GM12878 (cell line): ENCODE measurements at regions of chr19 and their contacts with region 1.

Region 1: DNA sequence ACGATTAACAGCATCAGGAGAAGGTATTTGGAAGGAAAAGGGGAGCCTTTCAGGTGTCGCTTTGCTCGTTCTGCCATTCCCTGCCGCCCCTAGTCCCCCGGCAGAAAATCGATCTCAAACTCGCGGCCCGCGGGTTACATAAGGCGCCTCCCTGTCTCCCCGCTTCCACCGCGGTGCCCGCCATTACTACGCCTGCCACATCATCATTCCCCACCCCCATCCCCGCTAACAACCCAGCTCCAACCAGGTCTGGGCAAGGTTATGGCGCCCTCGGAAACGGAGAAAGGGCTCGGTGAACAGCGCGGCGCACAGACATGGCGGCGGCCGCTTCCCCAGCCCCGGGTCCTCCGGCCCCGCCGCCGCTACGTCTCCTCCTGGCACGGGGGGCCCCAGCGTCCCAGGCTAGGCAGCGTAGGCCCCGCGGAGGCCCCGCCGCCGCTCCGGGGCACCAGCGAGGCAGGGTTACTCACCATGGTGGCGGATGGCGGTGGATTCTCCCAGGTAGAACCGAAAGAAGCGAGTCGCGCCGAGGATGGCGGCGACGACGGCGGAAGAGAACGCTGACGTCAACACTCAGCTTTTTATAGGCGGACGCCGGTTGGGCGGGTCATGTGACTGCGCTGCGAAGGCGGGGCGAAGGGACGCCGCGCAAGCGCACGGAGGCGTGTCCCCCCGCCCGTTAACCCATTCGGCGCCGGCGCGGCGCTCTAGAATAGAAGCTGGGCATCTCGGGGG is at the start of gene EEF2:
- DNase-seq: peak; percentile 48
- ATAC-seq: peak; percentile 32
- H3K4me3 ChIP-seq: peak within 1 kb of the TSS; percentile 97
- H3K27ac ChIP-seq: peak within 1 kb of the TSS; percentile 79
- H3K4me1 ChIP-seq: peaks cover 25% of the 10 kb centered on the region
- H3K27me3 ChIP-seq: no peaks in the 10 kb centered on the region
- CTCF ChIP-seq: no peak
- EP300 ChIP-seq: 0 out of 4 replicates have a peak, but pooled peaks of 1 of the 2 experiments have one; percentile 22
- POLR2A ChIP-seq: peak; percentile 100
- RAD21 ChIP-seq: no peak
- polyA plus RNA-seq, gene EEF2: 513 to 937 TPM

Region 2: GRCh38 chr19:3798137-3798536 is 186.9 kb before region 1 on chr19:
- CTCF ChIA-PET with region 1: no interaction called
- POLR2A ChIA-PET with region 1: no interaction called
- RAD21 ChIA-PET with region 1: no interaction called
- SMC1A ChIA-PET with region 1: no interaction called
- in situ Hi-C with region 1: no loop called
- intact Hi-C with region 1: no loop called
- DNase-seq: no peak
- ATAC-seq: no peak
- H3K4me3 ChIP-seq: no peak overlapping the region
- H3K27ac ChIP-seq: no peak overlapping the region
- H3K4me1 ChIP-seq: 0 out of 2 replicates have a peak, but pooled peaks cover 4% of the 10 kb centered on the region
- H3K27me3 ChIP-seq: peaks cover 2 to 4% of the 10 kb centered on the region in 2 experiments; a peak in 3 of 4 replicates
- CTCF ChIP-seq: no peak
- EP300 ChIP-seq: no peak
- POLR2A ChIP-seq: no peak
- RAD21 ChIP-seq: no peak

Region 3: GRCh38 chr19:4058034-4058692 is 73.1 kb after region 1 on chr19:
- CTCF ChIA-PET with region 1: interaction called, 12 read pairs
- POLR2A ChIA-PET with region 1: interaction called, 11 read pairs
- RAD21 ChIA-PET with region 1: interaction called, 4 read pairs
- SMC1A ChIA-PET with region 1: no interaction called
- in situ Hi-C with region 1: loop called (anchors 5 kb)
- intact Hi-C with region 1: no loop called
- DNase-seq: no peak
- ATAC-seq: peak; percentile 9
- H3K4me3 ChIP-seq: no peak overlapping the region
- H3K27ac ChIP-seq: peak overlapping the region; percentile 87; the same call in 1 of the 2 replicates
- H3K4me1 ChIP-seq: peaks cover 25% of the 10 kb centered on the region
- H3K27me3 ChIP-seq: no peaks in the 10 kb centered on the region
- CTCF ChIP-seq: no peak
- EP300 ChIP-seq: no peak
- POLR2A ChIP-seq: no peak
- RAD21 ChIP-seq: no peak

Region 4: DNA sequence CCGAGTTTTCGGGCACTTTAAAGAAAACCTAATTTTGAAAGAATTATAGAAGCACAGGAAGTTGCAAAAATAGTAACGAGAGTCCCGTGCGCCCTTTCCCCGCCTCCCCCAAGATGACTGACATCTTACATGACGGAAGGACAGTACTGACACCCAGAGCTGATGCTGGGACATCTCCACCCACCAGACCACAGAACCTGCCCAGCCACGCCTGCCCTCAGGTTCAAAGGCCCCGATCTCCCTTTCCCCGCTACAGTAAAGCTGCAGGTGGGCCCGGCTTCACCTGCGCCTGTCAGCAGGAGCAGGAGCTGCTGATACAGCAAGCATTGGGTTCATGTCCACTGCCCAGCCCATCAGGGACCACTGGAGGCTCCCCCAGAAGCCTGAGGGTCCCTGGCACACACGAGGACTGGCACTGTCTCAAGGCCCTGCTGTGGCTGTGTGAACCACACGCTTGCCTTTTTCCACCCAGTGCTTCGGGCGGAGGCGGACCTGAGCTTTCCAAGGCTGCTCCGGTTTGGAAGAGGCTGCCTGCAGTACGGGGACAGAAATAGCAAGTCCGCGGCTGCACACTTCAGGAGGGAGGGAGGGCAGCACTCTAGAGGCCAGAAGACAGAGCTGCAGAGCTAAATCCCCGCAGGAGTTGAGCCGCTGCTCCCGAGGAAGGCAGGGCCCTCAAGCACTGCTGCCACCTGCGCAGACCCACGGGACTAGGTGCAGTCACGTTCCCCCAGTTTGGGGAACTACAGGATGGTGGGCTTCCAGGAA is 130.2 kb after region 1 on chr19:
- CTCF ChIA-PET with region 1: interaction called, 20 read pairs
- POLR2A ChIA-PET with region 1: interaction called, 12 read pairs
- RAD21 ChIA-PET with region 1: interaction called, 11 read pairs
- SMC1A ChIA-PET with region 1: interaction called, 13 read pairs
- in situ Hi-C with region 1: no loop called
- intact Hi-C with region 1: loop called (anchors 5 kb)
- DNase-seq: peak; percentile 67
- ATAC-seq: peak; percentile 96
- H3K4me3 ChIP-seq: peak overlapping the region; percentile 50
- H3K27ac ChIP-seq: peak overlapping the region; percentile 55
- H3K4me1 ChIP-seq: peaks cover 28% of the 10 kb centered on the region
- H3K27me3 ChIP-seq: no peaks in the 10 kb centered on the region
- CTCF ChIP-seq: peak in 2 of 3 experiments; percentile 2 to 33; a peak in 3 of 6 replicates
- EP300 ChIP-seq: 0 out of 4 replicates have a peak, but pooled peaks of 1 of the 2 experiments have one; percentile 51
- POLR2A ChIP-seq: no peak; the same call in 1 of the 2 replicates
- RAD21 ChIP-seq: 0 out of 2 replicates have a peak, but pooled peaks have one; percentile 2

Region 5: GRCh38 chr19:4182084-4182810 is 197.2 kb after region 1 on chr19 and contains the starts of genes ANKRD24 and SIRT6:
- CTCF ChIA-PET with region 1: interaction called, 6 read pairs
- POLR2A ChIA-PET with region 1: interaction called, 3 read pairs
- RAD21 ChIA-PET with region 1: interaction called, 6 read pairs
- SMC1A ChIA-PET with region 1: interaction called, 7 read pairs
- in situ Hi-C with region 1: loop called (anchors 5 kb)
- intact Hi-C with region 1: loop called (anchors 2 kb)
- DNase-seq: peak; percentile 81
- ATAC-seq: peak; percentile 87
- H3K4me3 ChIP-seq: peak within 1 kb of the TSS; percentile 83
- H3K27ac ChIP-seq: peak within 1 kb of the TSS; percentile 94
- H3K4me1 ChIP-seq: peaks cover 15% of the 10 kb centered on the region
- H3K27me3 ChIP-seq: no peaks in the 10 kb centered on the region
- CTCF ChIP-seq: no peak
- EP300 ChIP-seq: peak; percentile 26 to 34; a peak in 1 of 4 replicates
- POLR2A ChIP-seq: peak; percentile 88
- RAD21 ChIP-seq: no peak
- polyA plus RNA-seq, gene ANKRD24: 0.02 TPM in 1 of 2 experiments, not detected in the other
- polyA plus RNA-seq, gene SIRT6: 1.3 to 1.5 TPM

Region 6: DNA sequence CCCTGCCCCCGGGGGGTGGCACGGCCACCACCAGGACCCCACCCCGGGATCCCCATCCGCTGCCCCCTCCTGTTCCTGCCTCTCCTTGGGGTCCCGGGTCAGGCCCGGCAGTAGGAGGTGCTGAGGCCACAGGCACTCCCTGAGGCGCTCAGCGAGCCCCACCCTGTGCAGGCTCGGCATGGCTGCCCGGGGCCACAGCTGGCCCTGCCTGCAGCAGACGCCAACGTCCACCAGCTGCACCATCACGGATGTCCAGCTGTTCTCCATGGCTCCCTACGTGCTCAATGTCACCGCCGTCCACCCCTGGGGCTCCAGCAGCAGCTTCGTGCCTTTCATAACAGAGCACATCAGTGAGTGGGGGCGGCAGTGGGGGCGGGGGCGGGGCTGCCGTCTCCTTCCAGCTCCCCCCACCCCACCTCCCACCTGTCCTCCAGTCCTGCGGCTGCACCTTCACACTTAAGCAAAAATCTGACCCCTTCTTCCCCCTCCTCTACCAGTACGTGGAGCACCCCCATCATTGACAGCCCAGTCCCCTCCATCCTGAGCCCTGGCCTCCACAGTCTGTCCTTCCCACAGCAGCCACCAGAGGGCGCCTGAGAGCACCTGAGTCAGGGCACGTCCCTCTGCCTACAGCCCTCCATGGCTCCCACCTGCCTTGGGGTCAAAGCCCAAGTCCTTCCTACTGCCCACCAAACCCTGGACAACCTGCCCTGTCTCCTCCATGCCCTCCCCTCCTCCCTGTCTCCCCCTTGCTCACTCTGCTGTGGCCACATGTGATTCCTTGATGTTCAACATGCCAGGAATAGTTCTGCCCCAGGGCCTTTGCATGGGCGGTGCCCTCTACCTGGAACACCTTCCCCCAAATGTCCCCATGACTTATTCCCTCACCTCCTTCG is 248.1 kb after region 1 on chr19:
- CTCF ChIA-PET with region 1: interaction called, 6 read pairs
- POLR2A ChIA-PET with region 1: interaction called, 11 read pairs
- RAD21 ChIA-PET with region 1: interaction called, 5 read pairs
- SMC1A ChIA-PET with region 1: interaction called, 6 read pairs
- in situ Hi-C with region 1: no loop called
- intact Hi-C with region 1: no loop called
- DNase-seq: no peak
- ATAC-seq: peak; percentile 50
- H3K4me3 ChIP-seq: peak overlapping the region; percentile 48; the same call in 1 of the 2 replicates
- H3K27ac ChIP-seq: no peak overlapping the region
- H3K4me1 ChIP-seq: peaks cover 3% of the 10 kb centered on the region
- H3K27me3 ChIP-seq: no peaks in the 10 kb centered on the region
- CTCF ChIP-seq: peak; percentile 77 to 98 (median 92)
- EP300 ChIP-seq: no peak
- POLR2A ChIP-seq: no peak
- RAD21 ChIP-seq: peak; percentile 41